ENCODE measurements at regions of chr18 and their contacts with region 1.

Region 1: DNA sequence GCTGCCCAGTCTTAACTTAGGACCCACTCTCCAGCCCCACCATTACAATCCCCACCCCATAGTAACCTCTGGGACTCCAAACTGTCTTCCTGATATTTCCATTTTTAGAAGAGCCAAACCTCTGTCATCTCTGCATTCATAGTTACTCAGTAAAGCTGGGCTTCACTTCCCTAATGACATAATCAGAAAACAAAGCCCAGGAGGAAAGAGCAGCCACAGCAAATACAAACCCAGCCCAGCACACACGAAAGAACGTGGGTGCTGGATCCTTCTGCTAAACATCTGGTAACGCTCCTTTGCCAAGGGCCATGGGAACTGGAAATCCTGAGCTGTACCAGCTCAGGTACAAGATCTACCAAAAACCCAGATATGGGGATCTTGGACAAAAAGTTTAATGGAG is 36.8 kb upstream of the RIOK3 start:
- DNase-seq: peak in 1 of 2 donors; percentile 18
- H3K4me3 ChIP-seq: no peak overlapping the region
- CTCF ChIP-seq: no peak
- POLR2A ChIP-seq: no peak

Region 2: DNA sequence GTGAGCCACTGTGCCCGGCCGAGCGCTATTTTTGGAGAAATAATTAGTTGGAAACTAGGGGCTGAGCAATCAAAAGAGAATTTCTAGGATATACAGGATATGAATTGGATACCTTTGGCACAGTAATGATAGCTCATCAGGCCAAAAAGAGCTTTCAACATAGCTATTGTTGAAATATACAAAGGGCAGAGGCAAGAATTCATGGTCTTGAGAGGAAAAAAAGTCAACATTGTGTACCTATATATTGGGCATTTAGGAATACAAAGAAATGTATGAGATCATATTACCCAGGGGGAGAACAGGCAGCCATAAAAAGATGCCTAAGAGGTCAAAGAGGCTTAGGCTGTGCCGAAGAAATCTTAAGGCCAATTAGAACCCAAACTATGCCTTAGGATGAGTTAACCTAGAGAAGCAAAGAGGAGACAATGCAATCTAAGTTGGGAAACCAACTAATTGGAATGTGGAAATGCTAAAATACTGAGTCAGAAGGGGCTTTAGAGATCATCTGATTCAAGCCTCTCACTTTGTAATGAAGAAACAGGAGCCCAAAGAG is 384.2 kb before region 1 on chr18:
- intact Hi-C with region 1: loop called (anchors 10 kb)
- DNase-seq: no peak
- H3K4me3 ChIP-seq: no peak overlapping the region
- CTCF ChIP-seq: no peak
- POLR2A ChIP-seq: no peak